Pancreas (tissue), 10 donors: ENCODE measurements at regions of chr7 and their contacts with region 1.

Region 1: DNA sequence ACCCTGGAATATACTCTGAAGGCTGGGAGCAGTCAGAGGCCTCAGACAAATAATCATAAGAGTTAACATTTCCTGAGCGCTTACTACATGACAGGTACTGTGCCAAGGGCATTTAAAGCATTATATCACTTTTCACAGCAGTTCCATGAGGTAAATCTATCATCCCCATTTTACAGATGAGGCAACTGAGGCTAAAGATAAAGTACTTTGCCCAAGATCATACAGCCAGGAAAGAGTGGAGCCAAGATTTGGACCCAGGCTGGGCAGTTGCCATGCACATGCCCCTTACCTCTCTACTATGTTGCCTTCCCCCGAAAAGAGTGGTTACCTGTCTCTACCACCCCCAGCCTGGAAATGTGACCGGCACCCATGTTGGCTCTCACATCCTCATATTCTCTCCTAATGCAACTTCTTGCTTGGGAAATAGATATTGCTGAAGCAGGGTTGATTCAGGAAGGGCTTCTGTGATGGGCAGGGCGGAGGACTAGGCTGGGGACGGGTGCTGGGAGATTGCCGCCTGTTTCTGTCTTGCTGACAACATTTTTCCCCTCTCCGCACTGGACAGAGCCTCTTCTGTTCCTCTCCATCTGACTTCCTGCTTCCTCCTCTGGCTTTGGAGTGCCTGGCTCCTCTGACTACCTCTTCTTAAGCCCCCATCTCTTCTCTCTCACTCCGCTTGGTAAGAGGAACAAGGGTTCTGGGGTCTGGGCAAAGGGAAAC is 13.8 kb downstream of the SMO start:
- DNase-seq: no peak
- ATAC-seq: peak in 1 of 4 donors; percentile 50
- H3K4me3 ChIP-seq: no peak overlapping the region
- H3K27ac ChIP-seq: no peak overlapping the region
- H3K4me1 ChIP-seq: no peaks in the 10 kb centered on the region
- H3K27me3 ChIP-seq: no peaks in the 10 kb centered on the region
- CTCF ChIP-seq: no peak

Region 2: DNA sequence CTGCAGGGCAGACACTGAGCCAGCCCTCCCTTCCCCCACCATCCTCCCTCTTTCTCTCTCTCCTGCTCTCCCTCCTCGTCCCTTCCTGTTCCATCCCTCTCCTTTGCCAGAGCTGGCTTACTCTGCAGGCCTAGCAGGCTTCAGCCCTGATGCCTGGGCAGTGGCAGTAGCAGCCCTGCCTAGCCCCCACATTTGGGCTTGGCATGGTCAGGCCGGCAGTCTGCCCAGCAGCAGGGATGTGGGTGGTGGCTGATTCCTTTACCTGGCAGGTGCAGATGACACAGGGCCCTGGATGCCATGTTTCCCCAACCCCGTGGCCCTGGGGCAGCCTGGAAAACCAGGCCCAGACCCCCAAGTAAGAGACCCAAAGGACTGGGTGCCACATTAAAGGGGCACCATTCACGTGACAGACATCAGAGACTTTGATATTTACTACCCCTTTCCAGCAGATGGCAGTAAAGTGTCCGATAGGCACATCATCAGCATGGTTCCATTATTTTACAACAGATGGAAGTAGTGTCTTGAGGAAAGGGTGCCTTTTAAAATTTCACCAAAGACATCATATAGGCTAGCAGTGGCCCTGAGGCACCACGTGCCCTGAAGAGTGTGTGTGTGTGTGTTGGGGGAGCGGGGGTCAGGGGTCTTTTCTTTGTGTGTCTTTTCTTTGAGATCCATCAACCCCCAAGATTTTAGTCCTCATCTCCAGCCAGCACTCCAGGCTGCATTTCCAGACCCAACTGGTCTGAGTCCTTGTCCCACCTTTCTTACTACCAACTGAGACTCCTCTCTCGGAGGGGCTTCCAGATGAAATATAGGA is 297.6 kb before region 1 on chr7:
- intact Hi-C with region 1: loop called in 1 of 3 experiments (anchors 10 kb)
- DNase-seq: peak in 2 of 6 donors; percentile 14 to 52
- ATAC-seq: peak; percentile 66 to 91 (median 82)
- H3K4me3 ChIP-seq: no peak overlapping the region
- H3K27ac ChIP-seq: no peak overlapping the region
- H3K4me1 ChIP-seq: no peaks in the 10 kb centered on the region
- H3K27me3 ChIP-seq: no peaks in the 10 kb centered on the region
- CTCF ChIP-seq: peak in 3 of 4 donors; percentile 32 to 48 (median 41)

Region 3: GRCh38 chr7:129169171-129169671 is 33.0 kb before region 1 on chr7:
- intact Hi-C with region 1: loop called in 2 of 3 experiments (anchors 5 kb)
- DNase-seq: peak in 4 of 6 donors; percentile 25 to 74 (median 46)
- ATAC-seq: peak; percentile 70 to 95 (median 86)
- H3K4me3 ChIP-seq: peak overlapping the region in 3 of 4 donors; percentile 28 to 55 (median 28)
- H3K27ac ChIP-seq: no peak overlapping the region
- H3K4me1 ChIP-seq: no peaks in the 10 kb centered on the region
- H3K27me3 ChIP-seq: no peaks in the 10 kb centered on the region
- CTCF ChIP-seq: no peak

Region 4: GRCh38 chr7:129298268-129298893 is 96.2 kb after region 1 on chr7:
- intact Hi-C with region 1: no loop called
- DNase-seq: peak in 4 of 6 donors; percentile 28 to 60 (median 43)
- ATAC-seq: peak in 3 of 4 donors; percentile 50 to 64 (median 56)
- H3K4me3 ChIP-seq: no peak overlapping the region
- H3K27ac ChIP-seq: no peak overlapping the region
- H3K4me1 ChIP-seq: peaks cover 0 to 7% (median 5%) of the 10 kb centered on the region in 3 donors
- H3K27me3 ChIP-seq: no peaks in the 10 kb centered on the region
- CTCF ChIP-seq: peak; percentile 34 to 60 (median 44)